ENCODE measurements at regions of chr22 and their contacts with region 1.

Region 1: DNA sequence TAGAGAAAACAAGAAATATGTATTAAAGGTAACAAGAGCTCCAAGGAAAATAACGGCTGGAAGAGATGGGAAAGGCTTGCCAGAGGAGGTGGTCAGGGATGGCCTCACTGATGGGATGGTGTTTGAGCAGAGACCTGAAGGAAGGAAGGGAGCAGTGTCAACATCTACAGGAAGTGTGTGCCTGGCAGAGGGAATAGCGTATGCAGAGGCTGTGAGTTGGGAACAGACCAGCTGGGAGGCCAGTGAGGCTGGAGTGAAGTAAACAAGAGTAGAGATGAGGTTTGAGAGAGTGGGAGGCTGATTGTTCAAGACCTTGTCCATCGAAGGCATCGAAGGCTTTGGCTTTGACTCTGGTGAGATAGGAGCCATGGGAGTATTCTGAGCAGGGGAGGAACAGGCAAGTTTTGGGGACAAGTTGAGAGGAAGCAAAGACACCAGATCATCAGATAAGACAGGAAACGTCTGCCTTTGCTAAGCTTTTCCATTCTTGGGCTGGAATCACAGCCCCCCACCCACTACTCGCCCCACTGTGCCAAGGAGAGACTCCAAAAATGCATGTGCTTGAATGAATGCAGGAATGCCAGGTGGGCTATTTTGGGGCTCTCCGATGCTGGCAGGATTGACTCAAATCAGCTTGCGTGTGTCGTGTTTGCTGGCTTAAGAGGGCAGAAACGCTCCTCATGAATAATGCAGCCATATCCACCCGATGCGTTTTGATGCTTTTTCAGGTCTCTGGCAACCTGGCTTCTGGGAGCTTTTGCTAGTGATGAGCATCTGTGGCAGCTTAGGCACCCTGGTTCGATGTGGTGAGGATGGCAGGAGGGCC is 7.2 kb downstream of the SGSM1 start:
- DNase-seq: no peak

Region 2: GRCh38 chr22:24731761-24732160 is 81.4 kb before region 1 on chr22:
- intact Hi-C with region 1: no loop called
- DNase-seq: no peak

Region 3: DNA sequence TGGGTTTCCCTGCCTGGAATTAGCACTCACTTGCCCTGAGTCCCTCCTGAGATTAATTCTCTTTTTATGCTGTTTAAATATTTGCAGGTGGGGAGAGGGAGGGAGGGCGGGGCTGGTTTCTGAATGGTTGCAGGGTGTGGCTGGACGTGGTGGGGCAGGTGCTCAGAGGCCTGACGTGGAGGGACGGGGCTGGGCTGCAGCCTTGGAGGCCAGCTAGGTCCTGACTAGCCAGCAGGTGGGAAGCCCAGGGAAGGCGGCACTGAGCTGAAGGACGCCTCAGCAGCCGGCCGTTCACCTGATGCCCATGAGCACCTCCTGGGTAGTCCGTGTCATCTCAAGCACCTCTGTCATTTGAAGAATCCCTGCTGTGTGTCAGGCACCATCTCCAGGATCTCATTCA is 14.1 kb after region 1 on chr22:
- intact Hi-C with region 1: loop called in 1 of 2 experiments (anchors 1 kb)
- DNase-seq: peak; percentile 66

Region 4: GRCh38 chr22:25025491-25026400 is 212.6 kb after region 1 on chr22:
- intact Hi-C with region 1: no loop called
- DNase-seq: no peak